ENCODE measurements at regions of chr7 and their contacts with region 1.

Region 1: GRCh38 chr7:117458977-117459583 is 20.7 kb upstream of the CFTR start:
- DNase-seq: no peak
- ATAC-seq: peak; percentile 61
- H3K4me3 ChIP-seq: no peak overlapping the region
- H3K27ac ChIP-seq: no peak overlapping the region
- H3K4me1 ChIP-seq: no peaks in the 10 kb centered on the region
- H3K27me3 ChIP-seq: no peaks in the 10 kb centered on the region
- CTCF ChIP-seq: peak; percentile 38 to 56 (median 51); a peak in 5 of 6 replicates
- EP300 ChIP-seq: no peak
- POLR2A ChIP-seq: no peak
- RAD21 ChIP-seq: peak; percentile 71

Region 2: DNA sequence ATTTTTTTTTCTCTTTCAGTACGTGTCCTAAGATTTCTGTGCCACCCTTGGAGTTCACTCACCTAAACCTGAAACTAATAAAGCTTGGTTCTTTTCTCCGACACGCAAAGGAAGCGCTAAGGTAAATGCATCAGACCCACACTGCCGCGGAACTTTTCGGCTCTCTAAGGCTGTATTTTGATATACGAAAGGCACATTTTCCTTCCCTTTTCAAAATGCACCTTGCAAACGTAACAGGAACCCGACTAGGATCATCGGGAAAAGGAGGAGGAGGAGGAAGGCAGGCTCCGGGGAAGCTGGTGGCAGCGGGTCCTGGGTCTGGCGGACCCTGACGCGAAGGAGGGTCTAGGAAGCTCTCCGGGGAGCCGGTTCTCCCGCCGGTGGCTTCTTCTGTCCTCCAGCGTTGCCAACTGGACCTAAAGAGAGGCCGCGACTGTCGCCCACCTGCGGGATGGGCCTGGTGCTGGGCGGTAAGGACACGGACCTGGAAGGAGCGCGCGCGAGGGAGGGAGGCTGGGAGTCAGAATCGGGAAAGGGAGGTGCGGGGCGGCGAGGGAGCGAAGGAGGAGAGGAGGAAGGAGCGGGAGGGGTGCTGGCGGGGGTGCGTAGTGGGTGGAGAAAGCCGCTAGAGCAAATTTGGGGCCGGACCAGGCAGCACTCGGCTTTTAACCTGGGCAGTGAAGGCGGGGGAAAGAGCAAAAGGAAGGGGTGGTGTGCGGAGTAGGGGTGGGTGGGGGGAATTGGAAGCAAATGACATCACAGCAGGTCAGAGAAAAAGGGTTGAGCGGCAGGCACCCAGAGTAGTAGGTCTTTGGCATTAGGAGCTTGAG is 20.4 kb after region 1 on chr7 and contains the start of gene CFTR:
- CTCF ChIA-PET with region 1: interaction called, 8 read pairs
- POLR2A ChIA-PET with region 1: interaction called, 3 read pairs
- RAD21 ChIA-PET with region 1: interaction called, 7 read pairs
- SMC1A ChIA-PET with region 1: interaction called, 16 read pairs
- in situ Hi-C with region 1: no loop called
- intact Hi-C with region 1: no loop called
- DNase-seq: no peak
- ATAC-seq: peak; percentile 42
- H3K4me3 ChIP-seq: no peak within 1 kb of the TSS
- H3K27ac ChIP-seq: no peak within 1 kb of the TSS
- H3K4me1 ChIP-seq: no peaks in the 10 kb centered on the region
- H3K27me3 ChIP-seq: peaks cover 0 to 6% of the 10 kb centered on the region in 2 experiments; a peak in 2 of 4 replicates
- CTCF ChIP-seq: no peak
- EP300 ChIP-seq: no peak
- POLR2A ChIP-seq: no peak
- RAD21 ChIP-seq: no peak
- polyA plus RNA-seq, gene CFTR: 0.02 TPM in 1 of 2 experiments, not detected in the other

Region 3: DNA sequence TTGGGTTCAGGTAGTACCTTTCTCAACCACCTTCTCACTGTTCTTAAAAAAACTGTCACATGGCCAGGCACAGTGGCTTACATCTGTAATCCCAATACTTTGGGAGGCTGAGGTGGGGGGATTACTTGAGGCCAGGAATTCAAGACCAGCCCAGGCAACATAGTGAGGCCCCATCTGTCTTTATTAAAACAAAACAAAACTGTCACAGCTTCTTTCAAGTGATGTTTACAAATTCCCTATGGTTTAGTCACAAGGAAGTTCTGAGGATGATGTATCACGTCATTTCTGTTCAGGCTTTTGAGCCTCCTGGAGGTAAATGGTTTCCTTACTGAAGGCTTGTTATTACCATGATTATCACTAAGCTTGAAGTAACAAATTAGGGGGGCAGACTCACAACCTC is 206.9 kb after region 1 on chr7:
- CTCF ChIA-PET with region 1: interaction called, 15 read pairs
- POLR2A ChIA-PET with region 1: no interaction called
- RAD21 ChIA-PET with region 1: interaction called, 19 read pairs
- SMC1A ChIA-PET with region 1: interaction called, 7 read pairs
- in situ Hi-C with region 1: no loop called
- intact Hi-C with region 1: no loop called
- DNase-seq: no peak
- ATAC-seq: no peak
- H3K4me3 ChIP-seq: no peak overlapping the region
- H3K27ac ChIP-seq: no peak overlapping the region
- H3K4me1 ChIP-seq: no peaks in the 10 kb centered on the region
- H3K27me3 ChIP-seq: no peaks in the 10 kb centered on the region; a peak in 1 of 4 replicates
- CTCF ChIP-seq: no peak
- EP300 ChIP-seq: no peak
- POLR2A ChIP-seq: no peak
- RAD21 ChIP-seq: no peak

Region 4: GRCh38 chr7:117731455-117731854 is 272.4 kb after region 1 on chr7:
- CTCF ChIA-PET with region 1: interaction called, 13 read pairs
- POLR2A ChIA-PET with region 1: no interaction called
- RAD21 ChIA-PET with region 1: interaction called, 4 read pairs
- SMC1A ChIA-PET with region 1: interaction called, 3 read pairs
- in situ Hi-C with region 1: no loop called
- intact Hi-C with region 1: no loop called
- DNase-seq: peak; percentile 66
- ATAC-seq: peak; percentile 86
- H3K4me3 ChIP-seq: no peak overlapping the region
- H3K27ac ChIP-seq: no peak overlapping the region
- H3K4me1 ChIP-seq: no peaks in the 10 kb centered on the region
- H3K27me3 ChIP-seq: no peaks in the 10 kb centered on the region; a peak in 1 of 4 replicates
- CTCF ChIP-seq: no peak
- EP300 ChIP-seq: peak; percentile 54 to 80; a peak in 3 of 4 replicates
- POLR2A ChIP-seq: no peak
- RAD21 ChIP-seq: no peak

Measured in GM12878 (cell line).